Esophagus muscularis mucosa (tissue), 4 donors: ENCODE measurements at regions of chr6 and their contacts with region 1.

Region 1: GRCh38 chr6:18122124-18123093 is at the start of gene NHLRC1:
- DNase-seq: peak; percentile 98
- H3K4me3 ChIP-seq: peak within 1 kb of the TSS; percentile 55 to 75 (median 68)
- H3K27ac ChIP-seq: peak within 1 kb of the TSS; percentile 54 to 74 (median 68)
- H3K4me1 ChIP-seq: peaks cover 11 to 21% (median 16%) of the 10 kb centered on the region in 4 donors
- H3K27me3 ChIP-seq: no peaks in the 10 kb centered on the region
- CTCF ChIP-seq: peak; percentile 97 to 99 (median 98)
- EP300 ChIP-seq: no peak
- POLR2A ChIP-seq: no peak
- total RNA-seq, gene NHLRC1: 0.50 to 1.2 (median 0.93) TPM

Region 2: DNA sequence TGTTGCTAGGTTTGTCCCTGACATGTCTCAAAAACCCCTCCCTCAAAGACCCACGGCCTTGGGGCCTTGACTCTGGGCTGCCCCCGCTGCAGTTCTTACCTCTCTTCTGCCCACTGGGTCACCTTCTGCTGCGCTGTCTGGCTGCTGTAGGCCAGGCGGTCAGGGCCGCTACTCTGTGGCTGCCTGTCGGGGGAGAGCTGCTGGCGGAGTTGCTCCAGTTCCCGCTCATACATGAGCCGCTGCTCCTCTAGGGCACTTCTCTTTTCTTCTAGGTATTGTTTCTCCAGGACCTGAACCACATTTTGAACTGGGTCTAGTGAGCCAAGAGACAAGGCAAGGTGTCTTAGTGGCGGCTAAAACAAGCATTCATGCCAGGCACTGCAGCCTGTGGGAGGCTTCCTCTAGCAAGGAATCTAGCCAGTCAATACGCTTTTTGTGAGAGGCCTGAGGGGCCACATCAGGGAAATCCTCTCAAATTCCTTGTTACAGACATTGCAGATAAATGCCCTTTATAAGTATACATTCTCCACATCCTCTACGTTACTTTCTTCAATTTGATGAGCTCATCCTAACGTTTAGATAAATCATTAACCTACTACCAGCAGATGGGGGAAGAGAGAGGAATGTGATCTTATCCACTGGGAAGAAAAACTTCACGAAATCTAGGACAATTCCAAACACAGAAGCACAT is 305.3 kb before region 1 on chr6:
- intact Hi-C with region 1: loop called (anchors 5 kb)
- DNase-seq: no peak
- H3K4me3 ChIP-seq: no peak overlapping the region
- H3K27ac ChIP-seq: no peak overlapping the region
- H3K4me1 ChIP-seq: no peaks in the 10 kb centered on the region
- H3K27me3 ChIP-seq: no peaks in the 10 kb centered on the region
- CTCF ChIP-seq: no peak
- EP300 ChIP-seq: no peak
- POLR2A ChIP-seq: no peak

Region 3: DNA sequence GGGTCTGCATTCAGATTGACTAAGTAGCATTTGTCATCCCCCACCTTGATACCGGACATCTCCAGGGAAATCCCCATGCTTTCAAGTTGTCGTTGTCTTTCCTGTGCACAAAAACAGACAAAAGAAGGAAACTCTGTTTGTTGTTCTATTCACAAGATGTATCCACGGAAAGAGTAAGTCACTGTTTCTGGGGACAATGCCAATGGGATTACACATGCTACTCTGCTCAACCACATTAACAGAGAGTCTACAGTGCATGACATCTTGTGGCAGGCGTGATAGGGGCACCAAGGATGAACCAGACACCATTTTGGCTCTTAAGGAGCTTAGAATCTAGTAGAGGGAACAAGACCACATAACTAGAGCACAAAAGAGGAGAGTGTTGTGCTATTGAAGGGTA is 291.3 kb before region 1 on chr6:
- intact Hi-C with region 1: loop called (anchors 5 kb)
- DNase-seq: no peak
- H3K4me3 ChIP-seq: no peak overlapping the region
- H3K27ac ChIP-seq: peak overlapping the region in 1 of 4 donors; percentile 29
- H3K4me1 ChIP-seq: peaks cover 9 to 13% (median 10%) of the 10 kb centered on the region in 4 donors
- H3K27me3 ChIP-seq: no peaks in the 10 kb centered on the region
- CTCF ChIP-seq: no peak
- EP300 ChIP-seq: no peak
- POLR2A ChIP-seq: no peak

Region 4: GRCh38 chr6:17987576-17988421 is 134.6 kb before region 1 on chr6 and contains the start of gene KIF13A:
- intact Hi-C with region 1: loop called (anchors 2 kb)
- DNase-seq: peak; percentile 94
- H3K4me3 ChIP-seq: peak within 1 kb of the TSS; percentile 67 to 94 (median 80)
- H3K27ac ChIP-seq: peak within 1 kb of the TSS; percentile 93 to 97 (median 96)
- H3K4me1 ChIP-seq: peaks cover 25 to 49% (median 38%) of the 10 kb centered on the region in 4 donors
- H3K27me3 ChIP-seq: no peaks in the 10 kb centered on the region
- CTCF ChIP-seq: peak; percentile 16 to 40 (median 25)
- EP300 ChIP-seq: no peak
- POLR2A ChIP-seq: no peak
- total RNA-seq, gene KIF13A: 63.8 to 86.3 (median 78.2) TPM

Region 5: DNA sequence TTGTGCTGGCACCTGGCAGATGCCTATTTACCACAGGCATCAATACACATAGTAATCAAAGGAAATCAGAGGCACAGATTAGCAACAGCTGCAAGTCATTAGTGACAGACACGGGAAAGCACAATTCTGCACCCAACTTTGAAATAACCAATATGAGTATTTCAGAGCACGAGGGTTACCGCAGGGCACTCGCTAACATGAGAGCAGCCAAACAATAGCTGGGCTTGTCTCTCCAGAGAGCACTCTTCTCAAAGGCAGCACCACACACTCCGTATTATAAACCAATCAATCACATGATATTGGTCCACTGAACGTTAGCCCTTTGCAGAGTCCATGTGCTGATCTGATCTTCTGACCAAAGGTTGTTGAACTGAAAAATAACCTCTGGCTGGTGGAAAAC is 414.3 kb after region 1 on chr6:
- intact Hi-C with region 1: no loop called
- DNase-seq: peak; percentile 74
- H3K4me3 ChIP-seq: no peak overlapping the region
- H3K27ac ChIP-seq: no peak overlapping the region
- H3K4me1 ChIP-seq: no peaks in the 10 kb centered on the region
- H3K27me3 ChIP-seq: peaks cover 0 to 26% (median 0%) of the 10 kb centered on the region in 4 donors
- CTCF ChIP-seq: no peak
- EP300 ChIP-seq: no peak
- POLR2A ChIP-seq: no peak